Heart left ventricle (tissue), 16 donors: ENCODE measurements at regions of chr18 and their contacts with region 1.

Region 1: GRCh38 chr18:65725251-65726050 is 25.4 kb upstream of the CDH7 start:
- DNase-seq: peak in 1 of 5 donors; percentile 30
- ATAC-seq: peak in 1 of 4 donors; percentile 39
- H3K4me3 ChIP-seq: no peak overlapping the region
- H3K27ac ChIP-seq: no peak overlapping the region
- H3K4me1 ChIP-seq: peaks cover 0 to 3% (median 0%) of the 10 kb centered on the region in 12 donors
- H3K27me3 ChIP-seq: no peaks in the 10 kb centered on the region
- CTCF ChIP-seq: peak in 11 of 12 donors; percentile 19 to 55 (median 38)
- POLR2A ChIP-seq: no peak

Region 2: GRCh38 chr18:65817178-65817577 is 91.7 kb after region 1 on chr18:
- intact Hi-C with region 1: no loop called
- DNase-seq: no peak
- ATAC-seq: no peak
- H3K4me3 ChIP-seq: no peak overlapping the region
- H3K27ac ChIP-seq: no peak overlapping the region
- H3K4me1 ChIP-seq: no peaks in the 10 kb centered on the region
- H3K27me3 ChIP-seq: no peaks in the 10 kb centered on the region
- CTCF ChIP-seq: no peak
- POLR2A ChIP-seq: no peak

Region 3: GRCh38 chr18:65968239-65969004 is 243.0 kb after region 1 on chr18:
- intact Hi-C with region 1: no loop called
- DNase-seq: no peak
- ATAC-seq: no peak
- H3K4me3 ChIP-seq: no peak overlapping the region
- H3K27ac ChIP-seq: no peak overlapping the region
- H3K4me1 ChIP-seq: no peaks in the 10 kb centered on the region
- H3K27me3 ChIP-seq: no peaks in the 10 kb centered on the region
- CTCF ChIP-seq: peak in 7 of 12 donors; percentile 13 to 41 (median 29)
- POLR2A ChIP-seq: no peak

Region 4: GRCh38 chr18:66495844-66496243 is 770.4 kb after region 1 on chr18:
- intact Hi-C with region 1: loop called in 9 of 10 experiments (anchors 5 to 10 kb)
- DNase-seq: peak; percentile 24 to 40 (median 36)
- ATAC-seq: peak; percentile 47 to 83 (median 66)
- H3K4me3 ChIP-seq: no peak overlapping the region
- H3K27ac ChIP-seq: no peak overlapping the region
- H3K4me1 ChIP-seq: no peaks in the 10 kb centered on the region
- H3K27me3 ChIP-seq: no peaks in the 10 kb centered on the region
- CTCF ChIP-seq: peak in 10 of 12 donors; percentile 27 to 60 (median 48)
- POLR2A ChIP-seq: no peak